Heart right ventricle (tissue), 16 donors: ENCODE measurements at regions of chr4 and their contacts with region 1.

Region 1: DNA sequence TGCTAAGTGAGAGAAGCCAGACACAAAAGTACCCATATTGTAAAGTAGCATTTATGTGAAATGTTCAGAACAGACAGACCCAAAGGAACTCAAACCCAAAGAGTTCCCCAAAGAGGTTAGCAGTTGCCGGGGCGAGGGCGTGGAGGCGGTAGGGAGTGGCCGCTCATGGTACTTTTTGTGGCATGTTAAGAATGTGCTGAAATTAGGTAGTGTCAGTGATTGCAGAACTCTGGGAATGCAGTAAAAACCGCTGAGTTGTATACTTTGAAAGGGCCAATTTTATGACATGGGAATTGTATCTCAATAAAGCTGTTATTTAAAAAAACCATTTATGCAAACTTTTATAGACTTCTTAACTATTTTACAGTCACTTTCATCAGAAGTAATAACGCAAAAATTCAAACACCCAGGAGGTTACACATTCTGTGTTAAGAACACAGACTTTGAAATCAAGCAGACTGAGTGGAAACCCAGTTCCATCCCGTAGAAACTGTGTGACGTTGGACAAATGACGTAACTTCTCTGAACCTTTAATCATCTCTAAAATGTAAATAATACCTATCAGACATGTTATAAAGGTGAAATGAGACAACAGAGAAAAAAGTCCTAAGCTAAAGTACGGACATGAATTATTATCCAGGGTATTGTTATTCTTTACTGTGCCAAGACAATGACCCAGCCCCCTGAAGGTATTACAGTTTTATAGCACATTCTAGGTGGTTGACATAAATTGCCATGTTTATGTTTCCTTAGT is 19.6 kb downstream of the ZFP42 start:
- DNase-seq: no peak
- ATAC-seq: no peak
- H3K4me3 ChIP-seq: no peak overlapping the region
- H3K27ac ChIP-seq: no peak overlapping the region
- H3K4me1 ChIP-seq: no peaks in the 10 kb centered on the region
- H3K27me3 ChIP-seq: peaks cover 0 to 32% (median 10%) of the 10 kb centered on the region in 7 donors
- CTCF ChIP-seq: no peak

Region 2: DNA sequence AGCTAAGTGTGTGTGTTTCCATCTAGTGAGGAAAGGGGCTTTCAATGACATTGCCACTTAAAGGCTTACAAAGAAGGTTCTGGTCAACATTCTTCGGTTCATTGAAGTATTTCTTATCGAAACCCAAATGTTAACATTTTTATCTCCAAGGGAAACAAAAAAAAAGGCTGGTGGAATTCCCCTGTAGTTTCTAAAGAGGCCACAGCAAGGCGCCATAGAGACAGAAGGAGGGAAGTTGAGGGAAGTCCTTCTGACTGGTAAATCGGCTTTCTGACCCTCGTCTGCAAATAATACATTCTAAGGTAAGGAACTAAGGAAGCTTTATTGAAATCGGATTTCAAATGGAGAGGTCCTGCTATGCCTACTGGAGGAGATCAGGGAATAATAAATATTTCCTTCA is 21.4 kb before region 1 on chr4:
- intact Hi-C with region 1: loop called in 1 of 10 experiments (anchors 1 kb)
- DNase-seq: no peak
- ATAC-seq: no peak
- H3K4me3 ChIP-seq: no peak overlapping the region
- H3K27ac ChIP-seq: no peak overlapping the region
- H3K4me1 ChIP-seq: no peaks in the 10 kb centered on the region
- H3K27me3 ChIP-seq: peaks cover 0 to 48% (median 37%) of the 10 kb centered on the region in 7 donors
- CTCF ChIP-seq: peak in 1 of 9 donors; percentile 12

Region 3: GRCh38 chr4:188154668-188155423 is 139.6 kb after region 1 on chr4:
- intact Hi-C with region 1: no loop called
- DNase-seq: no peak
- ATAC-seq: no peak
- H3K4me3 ChIP-seq: no peak overlapping the region
- H3K27ac ChIP-seq: no peak overlapping the region
- H3K4me1 ChIP-seq: no peaks in the 10 kb centered on the region
- H3K27me3 ChIP-seq: no peaks in the 10 kb centered on the region
- CTCF ChIP-seq: no peak